Right cardiac atrium (tissue), 5 donors: ENCODE measurements at regions of chr5 and their contacts with region 1.

Region 1: DNA sequence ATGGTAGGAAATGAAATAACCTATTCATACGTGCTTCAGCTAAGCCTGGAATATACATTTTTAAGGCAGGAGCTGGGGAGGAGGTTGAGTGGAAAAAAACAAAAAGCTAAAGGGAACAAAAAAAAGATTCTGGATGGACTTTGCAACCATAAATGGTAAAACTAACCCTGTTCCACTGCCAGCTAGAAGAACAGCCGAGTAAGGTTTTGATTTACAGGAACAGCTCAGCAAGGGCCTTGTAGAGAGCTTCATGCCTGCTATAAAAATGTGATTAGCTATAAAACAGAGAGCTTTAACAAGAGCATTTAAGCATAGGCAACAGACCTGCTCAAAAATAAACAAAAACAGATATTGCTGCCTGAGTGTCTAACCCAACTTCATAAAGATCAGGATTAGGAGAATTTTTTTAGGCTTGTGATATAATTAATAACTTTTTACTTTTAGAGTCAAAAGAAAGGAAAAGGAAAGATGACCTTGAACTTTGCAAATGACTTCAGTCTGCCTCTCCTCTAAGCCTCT is 194.8 kb downstream of the FBXL7 start:
- DNase-seq: no peak
- ATAC-seq: peak in 1 of 2 donors; percentile 69
- H3K4me3 ChIP-seq: no peak overlapping the region
- H3K27ac ChIP-seq: no peak overlapping the region
- H3K4me1 ChIP-seq: peaks cover 12% of the 10 kb centered on the region
- H3K27me3 ChIP-seq: no peaks in the 10 kb centered on the region

Region 2: DNA sequence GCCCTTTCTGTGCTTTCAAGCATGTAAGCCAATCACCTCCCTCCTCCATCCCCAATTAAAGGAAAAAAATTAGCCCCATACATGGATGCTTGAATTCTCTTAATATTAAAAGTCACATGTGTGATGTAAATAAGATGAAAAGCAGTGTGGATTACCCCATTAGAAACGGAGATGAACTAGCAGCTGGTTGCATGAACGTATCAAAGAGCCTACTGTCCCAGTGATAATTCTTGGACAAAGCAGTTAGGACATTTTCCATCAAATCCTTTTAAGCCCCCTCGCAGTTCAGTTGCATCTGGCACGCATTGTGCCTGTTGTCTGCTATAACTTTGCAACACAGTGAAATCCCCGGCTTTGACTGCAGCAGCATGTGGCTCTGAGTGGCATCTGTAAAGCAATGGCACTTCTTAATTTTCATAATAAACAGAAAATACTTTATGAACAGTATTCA is 90.8 kb after region 1 on chr5:
- intact Hi-C with region 1: loop called in 1 of 4 experiments (anchors 5 kb)
- DNase-seq: no peak
- ATAC-seq: no peak
- H3K4me3 ChIP-seq: no peak overlapping the region
- H3K27ac ChIP-seq: no peak overlapping the region
- H3K4me1 ChIP-seq: peaks cover 3% of the 10 kb centered on the region
- H3K27me3 ChIP-seq: no peaks in the 10 kb centered on the region